MCF 10A (cell line): ENCODE measurements at regions of chr2 and their contacts with region 1.

Region 1: GRCh38 chr2:70046534-70046933 is 40.7 kb upstream of the PCBP1 start:
- DNase-seq: no peak
- H3K4me3 Mint-ChIP-seq: no peak overlapping the region
- H3K27ac Mint-ChIP-seq: peak overlapping the region; percentile 25
- H3K4me1 Mint-ChIP-seq: no peaks in the 10 kb centered on the region
- H3K27me3 Mint-ChIP-seq: no peaks in the 10 kb centered on the region
- CTCF ChIP-seq: no peak

Region 2: DNA sequence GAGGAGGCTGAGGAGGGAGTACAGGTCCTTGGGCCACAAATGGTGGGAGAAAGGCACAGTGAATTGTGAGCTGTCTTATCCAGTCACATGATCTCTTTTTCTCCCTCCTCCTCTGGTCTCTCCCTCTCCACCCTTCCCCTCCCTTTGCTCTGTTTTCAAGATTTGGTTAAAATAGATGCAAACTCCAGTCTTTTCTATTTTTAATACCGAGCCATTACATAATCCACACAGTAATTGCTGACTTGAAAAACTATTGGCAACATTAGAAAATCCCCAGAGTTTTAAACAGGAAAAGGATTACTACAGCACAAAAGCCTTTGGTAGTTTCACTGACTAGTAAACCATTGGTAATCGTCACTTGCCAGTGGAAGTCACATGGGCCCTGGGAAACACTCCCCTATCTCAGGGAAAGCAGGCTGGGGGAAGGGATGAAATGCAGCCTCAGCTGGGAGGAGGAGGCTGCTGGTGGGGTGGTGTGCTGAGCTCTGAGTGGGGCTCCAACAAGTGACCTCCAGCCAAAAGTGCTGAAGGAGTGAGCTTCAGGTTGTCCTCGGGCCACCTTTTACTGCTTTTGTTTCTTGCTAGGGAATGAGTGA is 16.6 kb before region 1 on chr2:
- CTCF ChIA-PET with region 1: interaction called, 6 read pairs
- POLR2A ChIA-PET with region 1: no interaction called
- intact Hi-C with region 1: loop called (anchors 2 kb)
- DNase-seq: peak; percentile 18
- H3K4me3 Mint-ChIP-seq: no peak overlapping the region
- H3K27ac Mint-ChIP-seq: no peak overlapping the region
- H3K4me1 Mint-ChIP-seq: no peaks in the 10 kb centered on the region
- H3K27me3 Mint-ChIP-seq: no peaks in the 10 kb centered on the region
- CTCF ChIP-seq: no peak